Natural killer cell (primary cell): ENCODE measurements at regions of chr13 and their contacts with region 1.

Region 1: GRCh38 chr13:49936085-49936940 is at the start of gene SPRYD7:
- DNase-seq: peak; percentile 96 to 97
- ATAC-seq: peak; percentile 95 to 99 (median 97)
- H3K4me3 ChIP-seq: peak within 1 kb of the TSS; percentile 64
- H3K4me3 Mint-ChIP-seq: peak within 1 kb of the TSS; percentile 93
- H3K27ac ChIP-seq: peak within 1 kb of the TSS; percentile 46
- H3K27ac Mint-ChIP-seq: peak within 1 kb of the TSS; percentile 79 to 91
- H3K4me1 ChIP-seq: peaks cover 14% of the 10 kb centered on the region
- H3K4me1 Mint-ChIP-seq: peaks cover 17 to 20% of the 10 kb centered on the region in 2 donors
- H3K27me3 ChIP-seq: no peaks in the 10 kb centered on the region
- H3K27me3 Mint-ChIP-seq: no peaks in the 10 kb centered on the region
- CTCF ChIP-seq: peak; percentile 78
- total RNA-seq, gene SPRYD7: 3.0 to 6.2 (median 4.4) TPM

Region 2: GRCh38 chr13:49792550-49793324 is 143.6 kb before region 1 on chr13 and contains the start of gene KPNA3:
- intact Hi-C with region 1: loop called (anchors 2 kb)
- DNase-seq: peak; percentile 90 to 98
- ATAC-seq: peak; percentile 87 to 96 (median 87)
- H3K4me3 ChIP-seq: peak within 1 kb of the TSS; percentile 66
- H3K4me3 Mint-ChIP-seq: peak within 1 kb of the TSS; percentile 94
- H3K27ac ChIP-seq: peak within 1 kb of the TSS; percentile 66
- H3K27ac Mint-ChIP-seq: peak within 1 kb of the TSS; percentile 95 to 96
- H3K4me1 ChIP-seq: peaks cover 14% of the 10 kb centered on the region
- H3K4me1 Mint-ChIP-seq: peaks cover 37 to 39% of the 10 kb centered on the region in 2 donors
- H3K27me3 ChIP-seq: no peaks in the 10 kb centered on the region
- H3K27me3 Mint-ChIP-seq: peaks cover 12 to 16% of the 10 kb centered on the region in 2 donors
- CTCF ChIP-seq: no peak
- total RNA-seq, gene KPNA3: 27.8 to 35.5 (median 29.8) TPM

Region 3: DNA sequence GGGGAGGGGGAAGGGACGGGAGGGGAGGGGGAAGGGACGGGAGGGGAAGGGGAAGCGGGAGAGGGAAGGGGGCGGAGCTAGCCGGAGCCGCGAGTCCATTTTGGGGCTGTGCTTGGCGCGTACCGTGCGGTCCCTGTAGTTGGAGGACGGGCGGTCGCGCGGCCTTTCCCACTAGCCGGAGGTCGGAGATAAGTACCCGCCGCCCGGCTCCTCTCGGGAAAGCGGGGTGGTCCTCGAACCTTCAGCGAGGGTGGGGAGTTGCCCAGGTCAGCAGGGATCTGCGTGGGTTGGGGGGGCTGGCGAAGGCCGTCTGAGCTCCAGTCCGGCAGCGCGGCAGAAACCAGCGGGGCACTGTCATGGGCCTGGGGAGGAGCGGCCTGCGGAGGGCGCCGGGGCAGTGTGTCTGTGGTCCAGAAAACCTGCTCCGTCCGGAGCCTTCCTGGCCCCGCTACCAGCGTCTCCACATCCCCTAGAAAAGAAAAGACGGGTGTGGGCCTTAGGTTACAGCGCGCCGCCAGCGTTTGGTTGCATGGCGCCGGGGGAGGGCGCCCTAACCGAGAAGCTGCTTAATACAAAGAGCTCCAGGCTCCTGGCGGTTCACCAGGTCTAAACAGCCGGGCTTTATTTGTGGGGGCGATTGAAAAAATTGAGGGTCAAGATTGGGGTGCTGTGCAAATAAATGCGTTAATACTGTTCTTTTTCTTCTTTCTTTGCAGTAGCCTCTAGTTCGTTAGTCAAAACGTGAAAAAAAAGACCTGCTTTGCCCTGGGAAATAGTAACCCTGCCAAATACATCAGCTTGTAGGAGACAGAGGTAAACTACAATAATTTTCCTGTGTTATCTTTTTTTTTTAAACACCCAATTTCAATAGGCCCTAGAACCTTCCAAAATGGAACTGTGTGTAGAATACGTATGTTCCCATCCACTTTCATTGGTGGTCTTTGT is 60.9 kb after region 1 on chr13 and contains the start of gene TRIM13:
- intact Hi-C with region 1: loop called (anchors 5 kb)
- DNase-seq: peak; percentile 79 to 90
- ATAC-seq: peak; percentile 79 to 89 (median 84)
- H3K4me3 ChIP-seq: peak within 1 kb of the TSS; percentile 100
- H3K4me3 Mint-ChIP-seq: peak within 1 kb of the TSS; percentile 90
- H3K27ac ChIP-seq: peak within 1 kb of the TSS; percentile 99
- H3K27ac Mint-ChIP-seq: peak within 1 kb of the TSS; percentile 80 to 90
- H3K4me1 ChIP-seq: peaks cover 17% of the 10 kb centered on the region
- H3K4me1 Mint-ChIP-seq: peaks cover 18 to 35% of the 10 kb centered on the region in 2 donors
- H3K27me3 ChIP-seq: no peaks in the 10 kb centered on the region
- H3K27me3 Mint-ChIP-seq: no peaks in the 10 kb centered on the region
- CTCF ChIP-seq: peak; percentile 79
- total RNA-seq, gene TRIM13: 18.9 to 22.1 (median 20.6) TPM